ENCODE measurements at regions of chr6 and their contacts with region 1.

Region 1: DNA sequence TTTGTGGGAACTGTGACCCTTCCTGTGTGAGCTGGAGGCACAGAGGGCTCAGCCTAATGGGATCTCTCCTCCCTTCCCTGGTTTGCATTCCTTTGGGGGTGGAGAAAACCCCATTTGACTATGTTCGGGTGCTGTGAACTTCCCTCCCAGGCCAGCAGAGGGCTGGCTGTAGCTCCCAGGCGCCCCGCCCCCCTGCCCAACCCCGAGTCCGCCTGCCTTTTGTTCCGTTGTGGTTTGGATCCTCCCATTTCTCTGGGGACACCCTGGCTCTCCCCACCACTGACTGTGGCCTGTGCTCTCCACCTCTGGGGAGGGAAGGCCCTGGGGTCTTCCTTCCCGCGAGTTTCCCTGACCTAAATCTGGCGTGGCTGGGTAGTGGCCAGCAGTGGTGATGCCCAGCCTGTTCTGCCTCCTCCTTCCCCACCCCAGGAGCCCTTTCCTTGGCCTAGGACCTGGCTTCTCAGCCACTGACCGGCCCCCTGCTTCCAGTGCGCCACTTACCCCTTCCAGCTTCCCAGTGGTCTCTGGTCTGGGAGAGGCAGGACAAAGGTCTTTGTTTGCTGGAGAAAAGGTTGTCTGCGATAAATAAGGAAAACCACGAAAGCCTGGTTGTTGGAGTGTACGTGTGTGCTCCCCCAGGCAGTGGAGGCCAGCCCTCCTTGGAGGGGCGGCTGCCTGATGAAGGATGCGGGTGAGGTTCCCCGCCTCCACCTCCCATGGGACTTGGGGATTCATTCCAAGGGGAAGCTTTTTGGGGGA is 4.9 kb downstream of the VEGFA start:
- DNase-seq: peak; percentile 81
- ATAC-seq: no peak
- H3K4me3 Mint-ChIP-seq: peak overlapping the region; percentile 16
- H3K27ac Mint-ChIP-seq: no peak overlapping the region
- H3K4me1 Mint-ChIP-seq: peaks cover 23% of the 10 kb centered on the region
- H3K27me3 Mint-ChIP-seq: peaks cover 4% of the 10 kb centered on the region

Region 2: GRCh38 chr6:43150051-43150751 is 624.8 kb before region 1 on chr6:
- CTCF ChIA-PET with region 1: no interaction called
- POLR2A ChIA-PET with region 1: no interaction called
- intact Hi-C with region 1: no loop called
- DNase-seq: no peak
- ATAC-seq: no peak
- H3K4me3 Mint-ChIP-seq: no peak overlapping the region
- H3K27ac Mint-ChIP-seq: no peak overlapping the region
- H3K4me1 Mint-ChIP-seq: no peaks in the 10 kb centered on the region
- H3K27me3 Mint-ChIP-seq: no peaks in the 10 kb centered on the region

Region 3: GRCh38 chr6:43758617-43759050 is 16.3 kb before region 1 on chr6:
- CTCF ChIA-PET with region 1: interaction called, 26 read pairs
- POLR2A ChIA-PET with region 1: no interaction called
- intact Hi-C with region 1: no loop called
- DNase-seq: peak; percentile 64
- ATAC-seq: peak; percentile 81
- H3K4me3 Mint-ChIP-seq: no peak overlapping the region
- H3K27ac Mint-ChIP-seq: no peak overlapping the region
- H3K4me1 Mint-ChIP-seq: no peaks in the 10 kb centered on the region
- H3K27me3 Mint-ChIP-seq: peaks cover 6% of the 10 kb centered on the region

Region 4: DNA sequence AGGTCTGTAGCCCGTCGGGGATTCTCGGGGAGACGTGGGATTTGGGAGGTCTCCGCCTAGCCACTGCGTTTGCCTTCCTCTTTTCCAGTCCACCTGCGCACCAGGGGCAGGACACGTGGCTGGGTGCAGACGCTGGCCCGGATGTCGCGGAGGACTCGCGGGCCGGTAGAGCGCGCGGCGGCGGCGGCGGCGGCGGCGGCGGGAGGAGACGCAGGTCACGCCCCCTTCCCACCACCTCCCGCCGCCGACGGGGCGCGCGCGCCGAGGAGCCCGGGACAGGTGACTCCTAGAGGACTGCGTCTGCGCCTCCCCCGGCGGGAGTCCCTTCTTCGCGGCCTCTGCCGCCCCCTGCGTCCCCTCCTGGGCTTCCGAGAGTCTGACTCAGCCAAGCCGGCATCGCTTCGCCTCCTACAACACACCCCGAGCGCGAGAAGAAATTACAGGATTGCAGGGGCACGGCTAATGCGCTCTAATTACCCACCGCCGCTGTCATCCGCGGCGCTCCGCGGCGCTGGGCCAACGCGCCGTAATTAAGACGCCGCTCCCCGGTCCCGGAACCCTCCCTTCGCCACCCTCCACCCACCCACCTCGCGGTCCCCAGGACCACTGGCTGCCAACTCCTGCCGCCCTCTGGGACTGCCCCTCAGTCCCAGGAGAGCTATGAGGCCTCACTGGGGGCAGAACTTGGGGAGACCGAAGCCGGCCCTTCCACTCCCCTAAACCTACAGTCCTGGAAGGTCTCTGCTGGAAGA is 227.8 kb after region 1 on chr6:
- CTCF ChIA-PET with region 1: interaction called, 4 read pairs
- POLR2A ChIA-PET with region 1: no interaction called
- intact Hi-C with region 1: loop called (anchors 1 to 5 kb)
- DNase-seq: peak; percentile 87
- ATAC-seq: peak; percentile 65
- H3K4me3 Mint-ChIP-seq: peak overlapping the region; percentile 58
- H3K27ac Mint-ChIP-seq: no peak overlapping the region
- H3K4me1 Mint-ChIP-seq: peaks cover 11% of the 10 kb centered on the region
- H3K27me3 Mint-ChIP-seq: peaks cover 16% of the 10 kb centered on the region